WTC11 (cell line): ENCODE measurements at regions of chr18 and their contacts with region 1.

Region 1: DNA sequence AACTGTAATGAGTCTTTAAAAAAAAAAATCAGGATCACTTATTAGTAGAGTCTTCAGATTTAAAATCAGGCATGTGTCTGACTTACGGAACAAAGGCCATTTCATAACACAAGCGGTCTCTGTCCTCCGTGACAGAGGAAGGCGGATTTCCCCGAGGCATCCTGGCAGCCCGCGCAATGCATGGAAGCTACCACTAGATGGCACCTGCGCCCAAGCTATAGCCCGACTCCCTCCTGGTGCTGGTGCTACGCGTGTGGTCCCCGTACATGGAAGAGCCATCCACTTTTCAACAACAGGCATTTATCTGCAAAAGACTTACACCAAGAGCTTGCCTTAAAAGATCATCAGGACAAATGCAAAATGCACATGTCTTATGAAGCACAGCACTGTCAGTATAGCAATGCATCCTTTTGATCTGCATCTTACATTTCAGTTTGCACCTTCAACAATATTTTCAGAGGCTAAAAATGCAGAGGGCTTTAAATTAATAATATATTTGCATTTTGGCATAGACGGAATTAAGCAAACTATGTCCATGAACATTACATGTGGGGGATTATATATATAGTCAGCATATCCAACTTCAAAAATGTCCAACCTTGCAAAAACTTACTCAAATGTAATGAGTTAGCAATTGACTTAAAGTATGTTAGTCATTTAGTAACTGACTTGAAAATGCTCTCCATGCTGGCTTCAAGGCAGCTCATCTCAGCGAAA is 96.0 kb downstream of the ZNF516 start:
- DNase-seq: peak; percentile 84
- ATAC-seq: peak; percentile 85
- H3K4me3 Mint-ChIP-seq: no peak overlapping the region
- H3K27ac Mint-ChIP-seq: 0 out of 2 replicates have a peak overlapping the region, but pooled peaks have one; percentile 23
- H3K4me1 Mint-ChIP-seq: peaks cover 27% of the 10 kb centered on the region
- H3K27me3 Mint-ChIP-seq: no peaks in the 10 kb centered on the region
- CTCF ChIP-seq: peak; percentile 84

Region 2: DNA sequence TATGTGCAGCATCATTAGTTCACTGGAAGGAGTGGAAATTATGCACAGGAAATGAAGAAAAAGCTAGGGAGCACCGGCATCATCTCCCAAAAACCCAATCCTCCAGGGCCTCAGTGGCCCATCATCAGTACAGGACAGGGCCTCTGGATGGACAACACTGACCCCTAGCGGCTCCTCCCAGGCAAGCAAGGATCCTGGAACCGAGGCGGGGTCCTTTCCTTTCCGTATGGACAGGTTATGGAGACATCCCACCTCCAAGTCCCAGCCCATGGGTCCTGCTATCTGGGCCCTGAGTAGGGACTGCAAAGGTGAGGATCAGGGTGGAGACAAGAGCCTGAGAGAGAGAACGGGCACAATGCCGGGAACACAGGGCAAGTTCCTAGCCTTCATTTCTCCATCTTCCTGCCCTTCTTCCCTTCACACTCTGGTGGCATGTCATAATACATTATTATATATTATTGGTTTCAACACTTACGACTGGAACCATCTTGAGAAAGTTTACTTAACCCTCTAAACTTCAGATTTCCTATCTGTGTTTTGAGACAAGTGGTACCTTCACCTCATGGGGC is 27.8 kb after region 1 on chr18:
- CTCF ChIA-PET with region 1: interaction called, 23 read pairs
- POLR2A ChIA-PET with region 1: no interaction called
- DNase-seq: peak; percentile 87
- ATAC-seq: peak; percentile 95
- H3K4me3 Mint-ChIP-seq: no peak overlapping the region
- H3K27ac Mint-ChIP-seq: no peak overlapping the region; the same call in 1 of the 2 replicates
- H3K4me1 Mint-ChIP-seq: peaks cover 47% of the 10 kb centered on the region
- H3K27me3 Mint-ChIP-seq: no peaks in the 10 kb centered on the region
- CTCF ChIP-seq: peak; percentile 84

Region 3: GRCh38 chr18:76686737-76687262 is 287.7 kb after region 1 on chr18:
- CTCF ChIA-PET with region 1: interaction called, 14 read pairs
- POLR2A ChIA-PET with region 1: no interaction called
- DNase-seq: peak; percentile 63
- ATAC-seq: peak; percentile 88
- H3K4me3 Mint-ChIP-seq: peak overlapping the region; percentile 26; the same call in 1 of the 2 replicates
- H3K27ac Mint-ChIP-seq: peak overlapping the region; percentile 93
- H3K4me1 Mint-ChIP-seq: peaks cover 19% of the 10 kb centered on the region
- H3K27me3 Mint-ChIP-seq: no peaks in the 10 kb centered on the region
- CTCF ChIP-seq: no peak